ENCODE measurements at regions of chrX and their contacts with region 1.

Region 1: GRCh38 chrX:9530848-9531274 is 66.0 kb downstream of the TBL1X start:
- DNase-seq: no peak
- H3K4me3 ChIP-seq: no peak overlapping the region
- H3K27ac ChIP-seq: no peak overlapping the region
- H3K4me1 ChIP-seq: peaks cover 22 to 44% (median 33%) of the 10 kb centered on the region in 4 donors
- H3K27me3 ChIP-seq: no peaks in the 10 kb centered on the region
- CTCF ChIP-seq: no peak
- EP300 ChIP-seq: no peak
- POLR2A ChIP-seq: no peak

Region 2: DNA sequence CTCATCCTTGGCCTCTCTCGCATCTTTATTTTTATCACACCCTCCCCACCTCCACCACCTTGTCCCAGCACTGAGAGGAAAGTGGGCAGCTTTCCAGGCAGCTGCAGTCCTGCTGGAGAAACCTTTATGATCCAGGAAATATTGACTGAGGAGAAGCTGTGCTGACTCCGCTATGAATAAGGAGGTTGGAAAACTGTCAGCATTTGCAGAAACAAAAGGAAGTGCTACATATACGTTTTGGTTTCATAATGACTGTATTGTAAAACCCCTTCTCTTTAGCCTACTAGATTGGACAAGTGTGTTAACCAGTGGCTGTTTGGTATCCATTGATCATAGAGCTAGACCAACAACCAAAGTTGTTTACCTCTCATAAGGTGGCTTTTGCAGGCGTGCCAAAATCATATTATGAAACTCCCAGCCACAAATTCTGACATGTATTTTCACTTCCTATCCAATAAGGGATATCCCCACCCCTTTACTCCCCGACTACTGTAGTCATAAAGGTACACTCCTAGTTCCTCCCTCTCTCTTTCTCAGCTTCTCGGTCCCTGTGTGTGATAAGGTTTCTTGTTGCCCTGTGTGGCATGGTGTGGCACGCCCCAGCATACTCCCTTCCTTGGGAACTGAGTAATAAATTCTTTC is 146.4 kb after region 1 on chrX:
- intact Hi-C with region 1: loop called (anchors 10 kb)
- DNase-seq: no peak
- H3K4me3 ChIP-seq: no peak overlapping the region
- H3K27ac ChIP-seq: peak overlapping the region in 3 of 4 donors; percentile 15 to 44 (median 26)
- H3K4me1 ChIP-seq: peaks cover 0 to 12% (median 7%) of the 10 kb centered on the region in 4 donors
- H3K27me3 ChIP-seq: no peaks in the 10 kb centered on the region
- CTCF ChIP-seq: no peak
- EP300 ChIP-seq: no peak
- POLR2A ChIP-seq: no peak

Measured in esophagus muscularis mucosa (tissue), 4 donors.